ENCODE measurements at regions of chr4 and their contacts with region 1.

Region 1: DNA sequence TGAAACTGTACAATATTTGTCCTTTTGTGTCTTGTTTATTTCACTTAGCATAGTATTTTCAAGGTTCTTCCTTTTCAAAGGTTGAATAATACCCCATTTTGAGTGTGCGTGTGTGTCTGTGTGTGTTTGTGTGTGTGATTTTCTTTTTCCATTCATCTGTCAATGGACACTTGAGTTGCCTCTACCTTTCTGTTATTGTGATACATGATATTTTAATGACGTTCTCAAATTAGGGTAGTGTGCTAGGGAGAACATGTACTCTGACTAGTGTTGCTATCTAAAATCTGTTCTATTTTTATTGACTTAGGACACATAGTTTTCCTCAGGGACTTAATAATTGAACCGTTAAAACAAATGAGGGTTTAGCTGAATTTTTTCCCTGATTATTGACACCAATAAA is 9.9 kb downstream of the MMRN1 start:
- DNase-seq: no peak
- ATAC-seq: no peak
- H3K4me3 ChIP-seq: no peak overlapping the region
- H3K4me3 Mint-ChIP-seq: no peak overlapping the region
- H3K27ac ChIP-seq: no peak overlapping the region
- H3K27ac Mint-ChIP-seq: no peak overlapping the region
- H3K4me1 ChIP-seq: no peaks in the 10 kb centered on the region
- H3K4me1 Mint-ChIP-seq: no peaks in the 10 kb centered on the region
- H3K27me3 ChIP-seq: no peaks in the 10 kb centered on the region
- H3K27me3 Mint-ChIP-seq: peaks cover 0 to 5% of the 10 kb centered on the region in 2 donors
- CTCF ChIP-seq: no peak

Region 2: GRCh38 chr4:88792268-88792781 is 1112.2 kb before region 1 on chr4:
- intact Hi-C with region 1: no loop called
- DNase-seq: no peak
- ATAC-seq: no peak
- H3K4me3 ChIP-seq: no peak overlapping the region
- H3K4me3 Mint-ChIP-seq: no peak overlapping the region
- H3K27ac ChIP-seq: no peak overlapping the region
- H3K27ac Mint-ChIP-seq: no peak overlapping the region
- H3K4me1 ChIP-seq: no peaks in the 10 kb centered on the region
- H3K4me1 Mint-ChIP-seq: peaks cover 0 to 6% of the 10 kb centered on the region in 2 donors
- H3K27me3 ChIP-seq: no peaks in the 10 kb centered on the region
- H3K27me3 Mint-ChIP-seq: no peaks in the 10 kb centered on the region
- CTCF ChIP-seq: no peak

Region 3: DNA sequence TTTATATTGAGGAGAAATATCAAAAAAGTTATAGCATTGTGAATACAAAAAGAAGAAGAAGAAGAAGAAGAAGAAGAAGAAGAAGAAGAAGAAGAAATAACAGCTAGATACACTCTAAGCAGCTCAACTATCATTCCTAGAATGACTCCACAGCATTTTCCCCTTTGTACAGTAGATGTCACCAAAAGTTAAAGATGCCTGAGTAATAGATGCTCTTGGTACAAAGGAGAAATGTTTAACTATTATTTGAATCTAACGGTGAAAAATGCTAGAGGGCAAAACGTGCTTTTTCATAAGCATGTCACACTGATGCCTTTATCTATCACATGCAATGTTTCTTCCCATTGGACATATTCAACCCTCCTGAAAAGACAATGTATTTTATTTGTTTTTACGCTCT is 418.5 kb before region 1 on chr4:
- intact Hi-C with region 1: loop called (anchors 5 kb)
- DNase-seq: no peak
- ATAC-seq: peak in 1 of 3 donors; percentile 56
- H3K4me3 ChIP-seq: no peak overlapping the region
- H3K4me3 Mint-ChIP-seq: peak overlapping the region; percentile 22
- H3K27ac ChIP-seq: no peak overlapping the region
- H3K27ac Mint-ChIP-seq: peak overlapping the region in 1 of 2 donors; percentile 9
- H3K4me1 ChIP-seq: peaks cover 3% of the 10 kb centered on the region
- H3K4me1 Mint-ChIP-seq: peaks cover 4 to 6% of the 10 kb centered on the region in 2 donors
- H3K27me3 ChIP-seq: no peaks in the 10 kb centered on the region
- H3K27me3 Mint-ChIP-seq: no peaks in the 10 kb centered on the region
- CTCF ChIP-seq: peak; percentile 18

Region 4: DNA sequence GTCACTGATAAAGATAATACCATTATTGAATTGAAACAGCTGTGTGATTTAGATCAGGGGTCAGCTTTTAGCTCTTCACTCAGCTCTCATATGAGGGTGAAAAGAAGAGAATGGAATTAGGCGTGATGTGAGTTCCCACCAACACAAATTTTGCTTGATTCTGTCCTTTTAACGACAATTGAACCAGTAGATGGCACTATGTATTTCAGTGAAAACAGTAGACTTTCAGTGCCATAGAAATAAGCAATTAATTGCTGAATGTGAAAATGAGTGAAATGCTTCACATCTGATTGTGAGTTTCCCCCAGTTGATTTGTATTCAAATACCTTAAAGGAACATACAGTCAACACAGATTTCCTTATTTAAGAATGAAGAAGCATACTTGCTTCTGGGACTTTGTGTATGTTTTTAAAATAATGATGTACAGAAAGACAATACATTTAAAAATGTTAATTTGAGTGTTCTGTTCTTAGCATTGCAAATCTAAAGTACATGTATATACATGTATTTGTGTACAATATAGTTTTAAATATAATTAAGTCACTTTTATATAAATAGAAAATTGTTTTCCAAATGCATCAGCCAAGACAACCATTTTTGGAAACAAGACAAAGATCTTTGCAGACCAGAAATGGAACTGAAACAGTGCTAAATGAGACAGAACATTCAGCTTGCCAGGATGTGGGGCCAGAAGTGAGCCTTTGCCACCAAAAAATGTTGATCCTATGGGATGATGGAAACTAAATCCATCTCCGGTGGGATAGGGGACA is 246.4 kb before region 1 on chr4:
- intact Hi-C with region 1: loop called (anchors 5 kb)
- DNase-seq: peak in 1 of 2 donors; percentile 23
- ATAC-seq: no peak
- H3K4me3 ChIP-seq: no peak overlapping the region
- H3K4me3 Mint-ChIP-seq: no peak overlapping the region
- H3K27ac ChIP-seq: no peak overlapping the region
- H3K27ac Mint-ChIP-seq: no peak overlapping the region
- H3K4me1 ChIP-seq: no peaks in the 10 kb centered on the region
- H3K4me1 Mint-ChIP-seq: no peaks in the 10 kb centered on the region
- H3K27me3 ChIP-seq: no peaks in the 10 kb centered on the region
- H3K27me3 Mint-ChIP-seq: no peaks in the 10 kb centered on the region
- CTCF ChIP-seq: no peak

Region 5: DNA sequence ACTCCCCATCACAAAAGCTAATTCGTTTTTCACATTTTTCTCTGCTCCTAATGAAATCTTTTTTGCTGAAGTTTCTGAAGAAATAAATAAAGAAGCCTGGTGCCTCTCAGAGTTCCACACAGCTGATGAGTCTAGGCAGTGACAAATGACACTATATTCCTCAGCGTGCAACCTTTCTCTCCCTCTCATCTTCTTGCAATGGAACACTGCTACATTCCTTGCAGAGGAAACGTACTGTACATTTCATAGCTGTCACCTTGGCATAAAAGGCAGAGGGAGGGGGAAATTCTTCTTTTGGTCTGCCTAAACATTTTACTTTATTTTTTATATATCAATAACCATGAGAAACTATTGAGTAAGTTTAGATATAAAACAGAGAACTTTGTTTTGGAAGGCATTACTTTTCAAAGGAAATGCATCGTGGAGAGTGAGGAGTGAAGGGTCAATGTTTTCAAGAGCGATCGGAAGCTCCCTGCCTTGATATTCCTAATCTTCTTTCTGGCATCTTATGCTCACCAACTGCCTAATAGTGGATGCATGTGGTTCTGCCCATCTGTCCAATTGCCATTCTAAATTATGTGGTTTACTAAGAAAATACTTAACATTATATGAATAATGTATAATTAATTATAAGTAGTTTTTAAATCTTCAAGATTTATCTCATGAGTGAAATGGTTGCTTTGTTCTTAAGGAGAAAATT is 96.9 kb before region 1 on chr4:
- intact Hi-C with region 1: no loop called
- DNase-seq: no peak
- ATAC-seq: no peak
- H3K4me3 ChIP-seq: no peak overlapping the region
- H3K4me3 Mint-ChIP-seq: no peak overlapping the region
- H3K27ac ChIP-seq: no peak overlapping the region
- H3K27ac Mint-ChIP-seq: no peak overlapping the region
- H3K4me1 ChIP-seq: no peaks in the 10 kb centered on the region
- H3K4me1 Mint-ChIP-seq: no peaks in the 10 kb centered on the region
- H3K27me3 ChIP-seq: no peaks in the 10 kb centered on the region
- H3K27me3 Mint-ChIP-seq: no peaks in the 10 kb centered on the region
- CTCF ChIP-seq: no peak